ENCODE measurements at regions of chr15 and their contacts with region 1.

Region 1: DNA sequence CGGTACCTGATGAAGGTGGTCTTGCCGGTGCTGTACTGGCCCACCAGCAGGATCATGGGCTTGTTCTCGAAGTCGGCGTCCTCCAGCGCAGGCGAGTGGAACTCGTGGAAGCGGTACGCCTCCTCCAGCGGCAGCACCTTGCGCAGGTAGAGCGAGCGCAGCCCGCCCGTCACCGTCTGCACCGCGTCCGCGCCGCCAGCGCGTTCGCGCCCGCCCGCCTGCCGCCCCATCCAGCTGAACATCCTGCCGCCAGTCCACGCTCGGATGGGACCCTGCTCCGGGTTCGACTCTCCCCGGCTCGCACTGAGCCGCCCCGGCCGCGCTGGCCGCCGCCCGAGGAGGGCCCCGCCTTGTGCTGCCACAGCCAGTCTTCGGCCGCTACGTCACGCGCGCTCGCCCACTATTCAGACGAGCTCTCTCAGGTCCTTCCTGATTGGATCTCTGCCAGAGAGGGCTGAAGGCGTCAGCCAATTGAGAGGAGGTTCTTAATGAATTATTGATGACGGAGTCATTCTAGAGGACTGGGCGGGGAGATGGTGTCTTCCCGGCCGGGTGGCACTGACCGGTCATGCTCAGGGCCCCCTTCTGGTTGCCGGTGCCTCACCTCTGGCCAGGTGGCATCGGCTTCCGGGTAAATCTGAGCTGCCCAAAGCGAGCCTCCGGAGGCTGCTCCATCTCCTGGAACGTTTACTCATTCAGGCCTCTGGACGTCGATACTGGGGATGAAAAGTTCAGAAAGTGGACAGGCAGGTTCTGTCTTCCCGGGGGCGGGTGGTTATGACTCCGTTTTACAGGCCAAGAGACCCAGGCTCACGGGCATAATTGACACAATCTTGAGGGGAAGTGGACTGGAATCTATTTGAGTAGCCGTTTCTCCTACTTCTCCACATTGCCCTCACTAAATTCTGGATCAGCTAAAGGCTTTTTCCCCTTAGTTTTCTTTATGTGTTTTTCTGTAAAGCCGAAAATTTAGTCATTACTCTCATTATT is at the start of gene EHD4:
- DNase-seq: peak; percentile 96 to 99 (median 97)
- ATAC-seq: peak; percentile 98
- H3K4me3 ChIP-seq: peak within 1 kb of the TSS; percentile 82
- H3K27ac ChIP-seq: peak within 1 kb of the TSS; percentile 71
- H3K4me1 ChIP-seq: peaks cover 17 to 24% of the 10 kb centered on the region in 2 experiments
- H3K27me3 ChIP-seq: no peaks in the 10 kb centered on the region
- CTCF ChIP-seq: peak in 2 of 3 experiments; percentile 40 to 51; a peak in 3 of 6 replicates
- EP300 ChIP-seq: no peak
- POLR2A ChIP-seq: peak; percentile 84
- RAD21 ChIP-seq: no peak
- polyA plus RNA-seq, gene EHD4: 0.89 to 0.96 TPM

Region 2: GRCh38 chr15:41493205-41493901 is 479.2 kb before region 1 on chr15 and contains the start of gene ITPKA:
- CTCF ChIA-PET with region 1: no interaction called
- POLR2A ChIA-PET with region 1: no interaction called
- in situ Hi-C with region 1: no loop called
- intact Hi-C with region 1: loop called (anchors 5 kb)
- DNase-seq: peak; percentile 88 to 91 (median 90)
- ATAC-seq: peak; percentile 72
- H3K4me3 ChIP-seq: peak within 1 kb of the TSS; percentile 60
- H3K27ac ChIP-seq: peak within 1 kb of the TSS; percentile 80
- H3K4me1 ChIP-seq: peaks cover 24 to 42% of the 10 kb centered on the region in 2 experiments
- H3K27me3 ChIP-seq: no peaks in the 10 kb centered on the region
- CTCF ChIP-seq: no peak
- EP300 ChIP-seq: no peak
- POLR2A ChIP-seq: peak; percentile 80
- RAD21 ChIP-seq: no peak
- polyA plus RNA-seq, gene ITPKA: 0.14 to 0.55 TPM

Region 3: DNA sequence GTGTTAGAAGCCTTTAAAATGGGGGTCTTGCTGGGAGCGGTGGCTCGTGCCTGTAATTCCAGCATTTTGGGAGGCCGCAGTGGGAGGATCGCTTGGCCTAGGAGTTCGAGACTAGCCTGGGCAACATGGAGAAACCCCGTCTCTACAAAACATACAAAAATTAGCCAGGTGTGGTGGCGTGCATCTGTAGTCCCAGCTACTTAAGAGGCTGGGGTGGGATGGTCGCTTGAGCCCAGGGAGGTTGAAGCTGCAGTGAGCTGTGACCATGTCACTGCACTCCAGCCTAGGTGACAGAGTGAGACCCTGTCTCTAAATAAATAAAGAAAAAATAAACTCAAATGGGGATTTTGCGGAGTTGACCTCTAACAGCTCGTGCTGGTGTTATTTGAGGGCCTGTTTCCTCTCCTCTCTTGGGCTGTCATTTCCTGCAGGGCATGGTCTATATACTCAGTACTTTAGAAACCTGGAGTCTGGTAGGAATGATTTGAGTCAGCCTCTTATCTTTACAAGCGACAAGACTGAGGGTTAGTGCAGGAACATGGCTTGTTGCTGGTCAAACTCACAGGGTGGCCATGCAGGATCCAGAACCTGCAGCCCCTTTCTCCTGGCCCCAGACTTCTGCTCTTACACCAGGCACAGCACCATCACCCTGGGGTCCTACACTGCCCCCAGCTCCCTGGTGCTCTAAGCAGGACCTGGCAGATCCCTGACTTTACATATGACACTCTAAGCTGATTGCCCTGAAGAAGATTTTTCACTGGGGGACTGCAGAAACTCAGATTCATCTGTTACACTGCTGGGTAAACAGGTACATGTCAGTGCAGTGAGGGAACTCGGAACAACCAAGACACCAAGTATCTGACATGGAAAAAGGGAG is 15.3 kb before region 1 on chr15:
- CTCF ChIA-PET with region 1: no interaction called
- POLR2A ChIA-PET with region 1: interaction called, 10 read pairs
- in situ Hi-C with region 1: no loop called
- intact Hi-C with region 1: no loop called
- DNase-seq: no peak
- ATAC-seq: no peak; the same call in 1 of the 3 replicates
- H3K4me3 ChIP-seq: no peak overlapping the region
- H3K27ac ChIP-seq: no peak overlapping the region
- H3K4me1 ChIP-seq: no peaks in the 10 kb centered on the region; a peak in 2 of 5 replicates
- H3K27me3 ChIP-seq: no peaks in the 10 kb centered on the region
- CTCF ChIP-seq: no peak
- EP300 ChIP-seq: no peak
- POLR2A ChIP-seq: no peak
- RAD21 ChIP-seq: no peak

Region 4: GRCh38 chr15:42313463-42313862 is 340.9 kb after region 1 on chr15:
- CTCF ChIA-PET with region 1: no interaction called
- POLR2A ChIA-PET with region 1: no interaction called
- in situ Hi-C with region 1: no loop called
- intact Hi-C with region 1: no loop called
- DNase-seq: peak in 2 of 4 experiments; percentile 5 to 8
- ATAC-seq: peak; percentile 51; the same call in 1 of the 3 replicates
- H3K4me3 ChIP-seq: no peak overlapping the region
- H3K27ac ChIP-seq: no peak overlapping the region
- H3K4me1 ChIP-seq: no peaks in the 10 kb centered on the region
- H3K27me3 ChIP-seq: no peaks in the 10 kb centered on the region
- CTCF ChIP-seq: peak in 1 of 3 experiments; percentile 23; a peak in 2 of 6 replicates
- EP300 ChIP-seq: no peak
- POLR2A ChIP-seq: no peak
- RAD21 ChIP-seq: peak in 1 of 2 experiments; percentile 28; a peak in 1 of 4 replicates